PC-3 (cell line): ENCODE measurements at regions of chr10 and their contacts with region 1.

Region 1: DNA sequence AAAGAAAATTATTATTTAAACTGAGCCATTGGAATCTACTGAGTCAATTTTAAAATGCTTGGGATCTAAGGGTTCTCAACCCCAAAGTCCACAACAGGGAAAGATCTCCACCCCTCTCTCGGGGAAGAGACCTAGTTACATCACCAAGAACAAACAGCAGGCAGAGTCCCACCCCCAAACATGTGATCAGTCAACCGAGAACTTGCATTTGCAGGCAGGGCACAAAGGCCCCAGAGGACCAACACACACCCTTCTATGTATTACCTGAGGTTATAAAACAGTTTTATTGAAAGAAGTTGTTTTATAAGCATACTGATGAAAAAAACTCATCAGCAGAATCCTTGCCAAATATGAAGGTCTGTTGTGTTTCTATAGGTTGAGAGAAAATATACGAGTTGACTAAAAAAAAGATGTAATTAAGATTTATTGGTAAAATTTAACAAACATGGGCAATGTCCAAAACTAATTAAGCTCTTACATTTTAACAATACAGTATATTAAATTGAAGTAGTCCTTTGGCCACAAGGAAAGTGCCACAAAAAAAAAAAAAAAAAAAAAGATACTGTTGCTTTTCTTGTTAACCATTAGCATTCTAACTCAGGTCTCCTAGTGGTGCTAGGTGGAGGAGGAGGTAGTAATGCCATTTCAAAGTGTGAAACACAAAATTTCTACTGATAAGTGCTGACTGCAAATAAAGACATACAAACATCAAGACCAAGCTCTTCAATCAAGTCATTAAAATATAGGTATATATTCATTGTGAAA is 975 bp upstream of the USP54 start:
- DNase-seq: peak; percentile 95
- ATAC-seq: peak; percentile 90
- H3K4me3 ChIP-seq: peak overlapping the region; percentile 46
- H3K27ac ChIP-seq: peak overlapping the region; percentile 65
- H3K4me1 ChIP-seq: peaks cover 59% of the 10 kb centered on the region
- H3K27me3 ChIP-seq: no peaks in the 10 kb centered on the region
- CTCF ChIP-seq: peak; percentile 33; the same call in 1 of the 2 replicates

Region 2: DNA sequence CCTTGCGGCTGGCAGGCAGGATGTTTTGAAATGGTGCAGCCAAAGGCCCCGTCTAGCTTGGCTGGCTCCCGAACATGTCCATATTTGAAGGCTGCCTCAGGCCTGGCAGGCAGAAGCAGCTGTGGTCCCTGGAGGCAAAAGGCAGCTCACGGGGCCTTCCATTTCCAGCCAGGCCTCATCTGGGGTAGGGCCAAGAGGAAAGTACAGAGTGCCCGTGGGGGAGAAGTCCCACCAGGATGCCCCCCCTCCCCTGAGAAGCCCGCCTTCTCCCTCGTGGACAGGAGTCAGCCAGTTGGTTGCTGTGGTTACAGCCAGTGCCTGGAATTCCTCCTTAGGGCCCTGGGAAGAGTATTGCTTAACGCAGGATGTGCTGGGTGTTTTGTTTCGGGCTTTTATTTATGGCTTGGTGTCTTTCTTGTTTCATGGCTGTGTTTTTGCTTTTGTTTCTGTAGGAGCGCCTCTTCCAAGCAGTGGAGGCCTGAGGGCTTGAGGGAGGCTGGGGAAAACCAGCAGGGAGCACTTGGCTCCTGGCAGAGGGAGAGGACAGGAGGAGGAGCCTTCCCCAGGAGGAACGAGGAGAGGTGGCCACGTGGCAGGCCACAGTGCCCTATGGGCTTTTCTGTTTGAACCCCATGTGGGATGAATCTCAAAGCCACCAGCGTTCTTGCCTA is 1582.6 kb before region 1 on chr10:
- CTCF ChIA-PET with region 1: no interaction called
- POLR2A ChIA-PET with region 1: no interaction called
- intact Hi-C with region 1: no loop called
- DNase-seq: no peak
- ATAC-seq: no peak
- H3K4me3 ChIP-seq: no peak overlapping the region
- H3K27ac ChIP-seq: no peak overlapping the region
- H3K4me1 ChIP-seq: no peaks in the 10 kb centered on the region
- H3K27me3 ChIP-seq: no peaks in the 10 kb centered on the region
- CTCF ChIP-seq: no peak

Region 3: GRCh38 chr10:73467206-73467605 is 124.9 kb before region 1 on chr10:
- CTCF ChIA-PET with region 1: no interaction called
- POLR2A ChIA-PET with region 1: interaction called, 14 read pairs
- intact Hi-C with region 1: no loop called
- DNase-seq: no peak
- ATAC-seq: no peak
- H3K4me3 ChIP-seq: no peak overlapping the region
- H3K27ac ChIP-seq: no peak overlapping the region
- H3K4me1 ChIP-seq: no peaks in the 10 kb centered on the region
- H3K27me3 ChIP-seq: no peaks in the 10 kb centered on the region
- CTCF ChIP-seq: no peak

Region 4: GRCh38 chr10:73529089-73529832 is 62.9 kb before region 1 on chr10:
- CTCF ChIA-PET with region 1: interaction called, 6 read pairs
- POLR2A ChIA-PET with region 1: no interaction called
- intact Hi-C with region 1: loop called (anchors 1 kb)
- DNase-seq: peak; percentile 99
- ATAC-seq: peak; percentile 97
- H3K4me3 ChIP-seq: no peak overlapping the region
- H3K27ac ChIP-seq: no peak overlapping the region
- H3K4me1 ChIP-seq: no peaks in the 10 kb centered on the region
- H3K27me3 ChIP-seq: no peaks in the 10 kb centered on the region
- CTCF ChIP-seq: peak; percentile 100

Region 5: GRCh38 chr10:73559590-73559989 is 32.5 kb before region 1 on chr10:
- CTCF ChIA-PET with region 1: no interaction called
- POLR2A ChIA-PET with region 1: interaction called, 10 read pairs
- intact Hi-C with region 1: no loop called
- DNase-seq: peak; percentile 70
- ATAC-seq: peak; percentile 61
- H3K4me3 ChIP-seq: no peak overlapping the region
- H3K27ac ChIP-seq: no peak overlapping the region
- H3K4me1 ChIP-seq: no peaks in the 10 kb centered on the region
- H3K27me3 ChIP-seq: no peaks in the 10 kb centered on the region
- CTCF ChIP-seq: no peak

Region 6: DNA sequence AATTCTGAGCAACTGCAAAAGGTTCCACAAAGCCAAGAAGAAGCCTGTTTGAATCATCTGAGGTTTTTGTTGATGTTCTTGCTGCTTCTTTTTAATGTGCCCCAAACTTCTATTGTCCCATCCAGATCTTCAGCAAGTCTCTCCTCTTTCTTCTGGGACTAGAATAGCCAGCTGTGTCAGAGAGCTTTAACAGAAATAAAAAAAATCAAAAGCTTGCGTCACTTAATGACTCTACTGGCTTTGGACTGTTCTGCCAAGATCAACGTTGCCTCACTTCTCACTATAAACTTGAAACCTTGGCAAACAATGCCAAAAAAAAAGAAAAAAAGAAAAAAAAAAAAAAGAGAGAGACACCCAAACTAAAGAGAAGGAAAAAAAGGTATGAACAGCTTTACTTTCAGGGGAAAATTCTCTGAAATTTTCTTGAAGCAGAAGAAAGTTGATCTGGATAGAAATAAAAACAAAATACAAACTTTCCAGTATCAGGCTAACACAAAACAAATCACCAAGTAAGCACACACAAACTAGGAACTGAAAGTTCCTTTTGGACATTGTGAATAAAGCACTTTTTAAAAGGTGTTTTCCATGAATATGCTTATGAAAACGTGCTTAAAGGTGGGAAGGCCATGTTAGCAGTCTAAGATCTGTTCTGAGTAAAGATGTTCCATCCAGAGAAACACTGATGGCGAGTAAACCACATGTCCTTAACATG is 15.8 kb before region 1 on chr10:
- CTCF ChIA-PET with region 1: no interaction called
- POLR2A ChIA-PET with region 1: interaction called, 12 read pairs
- intact Hi-C with region 1: no loop called
- DNase-seq: peak; percentile 98
- ATAC-seq: peak; percentile 61
- H3K4me3 ChIP-seq: no peak overlapping the region
- H3K27ac ChIP-seq: peak overlapping the region; percentile 49
- H3K4me1 ChIP-seq: peaks cover 34% of the 10 kb centered on the region
- H3K27me3 ChIP-seq: no peaks in the 10 kb centered on the region
- CTCF ChIP-seq: no peak

Region 7: DNA sequence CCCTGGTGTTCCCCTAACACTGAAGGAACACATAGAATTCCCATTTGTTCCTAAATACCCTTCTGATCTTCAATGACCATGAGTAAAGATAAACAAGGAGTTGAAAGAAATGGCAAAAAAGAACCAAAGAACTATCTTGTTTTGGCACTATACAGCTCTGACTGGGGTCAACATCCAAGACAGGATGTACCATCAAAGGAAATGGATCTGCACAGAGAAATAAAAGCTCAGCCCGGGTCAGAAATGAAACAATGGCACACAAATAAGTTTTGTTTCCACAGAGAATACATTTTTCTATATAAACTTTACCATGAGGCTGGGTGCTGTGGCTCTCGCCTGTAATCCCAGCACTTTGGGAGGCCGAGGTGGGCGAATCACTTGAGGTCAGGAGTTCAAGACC is 17.0 kb after region 1 on chr10:
- CTCF ChIA-PET with region 1: interaction called, 3 read pairs
- POLR2A ChIA-PET with region 1: interaction called, 36 read pairs
- intact Hi-C with region 1: no loop called
- DNase-seq: no peak
- ATAC-seq: no peak
- H3K4me3 ChIP-seq: no peak overlapping the region
- H3K27ac ChIP-seq: no peak overlapping the region
- H3K4me1 ChIP-seq: no peaks in the 10 kb centered on the region
- H3K27me3 ChIP-seq: no peaks in the 10 kb centered on the region
- CTCF ChIP-seq: no peak

Region 8: DNA sequence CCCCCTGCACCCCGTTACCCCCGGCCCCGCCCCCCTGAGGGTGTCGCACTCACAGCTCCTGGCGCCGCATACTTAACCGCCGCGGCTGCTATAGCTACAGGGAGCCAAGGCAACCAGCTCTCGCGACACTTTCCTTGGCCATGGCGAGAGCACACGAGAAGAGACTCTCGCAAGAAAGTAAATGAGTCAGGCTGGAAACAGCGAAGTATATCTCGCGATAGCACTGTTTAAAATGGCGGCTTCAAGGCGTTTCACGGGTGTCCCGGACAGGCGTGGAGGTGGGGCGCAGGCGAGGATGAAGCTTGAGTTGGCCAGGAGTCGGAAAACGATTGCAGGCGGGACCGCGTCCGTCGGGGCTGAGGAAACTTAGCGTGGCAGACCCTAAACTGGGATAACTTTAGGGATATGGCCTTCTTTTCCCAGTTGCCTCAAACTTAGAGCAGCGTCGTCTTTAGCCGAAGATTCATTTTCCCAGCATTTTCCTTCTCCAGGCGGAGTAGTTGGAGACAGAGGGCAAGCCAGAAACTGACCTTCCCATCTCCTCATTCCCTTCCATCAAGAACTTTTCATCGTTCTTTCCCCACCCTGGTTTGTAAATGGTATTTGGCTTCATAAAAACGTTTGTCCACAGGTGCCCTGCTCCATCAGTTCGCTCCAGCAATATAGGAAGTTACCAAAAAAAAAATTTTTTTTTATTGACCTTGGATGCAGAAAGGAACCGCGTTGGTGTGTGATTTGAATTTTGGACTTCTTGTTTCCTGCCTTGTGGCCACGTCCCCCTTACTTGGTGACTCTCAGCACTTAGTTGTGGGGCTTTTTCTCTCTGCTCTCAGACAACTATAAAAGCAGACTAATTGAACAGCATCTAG is 34.0 kb after region 1 on chr10:
- CTCF ChIA-PET with region 1: interaction called, 3 read pairs
- POLR2A ChIA-PET with region 1: interaction called, 25 read pairs
- intact Hi-C with region 1: loop called (anchors 1 kb)
- DNase-seq: peak; percentile 100
- ATAC-seq: peak; percentile 97
- H3K4me3 ChIP-seq: peak overlapping the region; percentile 76
- H3K27ac ChIP-seq: peak overlapping the region; percentile 40
- H3K4me1 ChIP-seq: peaks cover 14% of the 10 kb centered on the region
- H3K27me3 ChIP-seq: no peaks in the 10 kb centered on the region
- CTCF ChIP-seq: no peak